Heart left ventricle (tissue), 16 donors: ENCODE measurements at regions of chr19 and their contacts with region 1.

Region 1: GRCh38 chr19:11155373-11156120 is at the start of gene SPC24:
- DNase-seq: peak; percentile 95 to 98 (median 97)
- ATAC-seq: peak; percentile 90 to 96 (median 94)
- H3K4me3 ChIP-seq: peak within 1 kb of the TSS; percentile 25 to 78 (median 60)
- H3K27ac ChIP-seq: peak within 1 kb of the TSS; percentile 30 to 89 (median 74)
- H3K4me1 ChIP-seq: peaks cover 0 to 64% (median 34%) of the 10 kb centered on the region in 12 donors
- H3K27me3 ChIP-seq: no peaks in the 10 kb centered on the region
- CTCF ChIP-seq: peak in 1 of 12 donors; percentile 7
- POLR2A ChIP-seq: peak in 1 of 2 donors; percentile 76
- total RNA-seq, gene SPC24: 1.7 to 10.7 (median 5.2) TPM

Region 2: GRCh38 chr19:11191273-11191755 is 35.8 kb after region 1 on chr19:
- intact Hi-C with region 1: loop called in 4 of 10 experiments (anchors 5 kb)
- DNase-seq: peak; percentile 79 to 94 (median 90)
- ATAC-seq: peak; percentile 44 to 86 (median 81)
- H3K4me3 ChIP-seq: peak overlapping the region in 2 of 12 donors; percentile 16 to 22
- H3K27ac ChIP-seq: peak overlapping the region in 11 of 12 donors; percentile 62 to 97 (median 81)
- H3K4me1 ChIP-seq: peaks cover 13 to 88% (median 69%) of the 10 kb centered on the region in 12 donors
- H3K27me3 ChIP-seq: no peaks in the 10 kb centered on the region
- CTCF ChIP-seq: no peak
- POLR2A ChIP-seq: peak in 1 of 2 donors; percentile 64

Region 3: DNA sequence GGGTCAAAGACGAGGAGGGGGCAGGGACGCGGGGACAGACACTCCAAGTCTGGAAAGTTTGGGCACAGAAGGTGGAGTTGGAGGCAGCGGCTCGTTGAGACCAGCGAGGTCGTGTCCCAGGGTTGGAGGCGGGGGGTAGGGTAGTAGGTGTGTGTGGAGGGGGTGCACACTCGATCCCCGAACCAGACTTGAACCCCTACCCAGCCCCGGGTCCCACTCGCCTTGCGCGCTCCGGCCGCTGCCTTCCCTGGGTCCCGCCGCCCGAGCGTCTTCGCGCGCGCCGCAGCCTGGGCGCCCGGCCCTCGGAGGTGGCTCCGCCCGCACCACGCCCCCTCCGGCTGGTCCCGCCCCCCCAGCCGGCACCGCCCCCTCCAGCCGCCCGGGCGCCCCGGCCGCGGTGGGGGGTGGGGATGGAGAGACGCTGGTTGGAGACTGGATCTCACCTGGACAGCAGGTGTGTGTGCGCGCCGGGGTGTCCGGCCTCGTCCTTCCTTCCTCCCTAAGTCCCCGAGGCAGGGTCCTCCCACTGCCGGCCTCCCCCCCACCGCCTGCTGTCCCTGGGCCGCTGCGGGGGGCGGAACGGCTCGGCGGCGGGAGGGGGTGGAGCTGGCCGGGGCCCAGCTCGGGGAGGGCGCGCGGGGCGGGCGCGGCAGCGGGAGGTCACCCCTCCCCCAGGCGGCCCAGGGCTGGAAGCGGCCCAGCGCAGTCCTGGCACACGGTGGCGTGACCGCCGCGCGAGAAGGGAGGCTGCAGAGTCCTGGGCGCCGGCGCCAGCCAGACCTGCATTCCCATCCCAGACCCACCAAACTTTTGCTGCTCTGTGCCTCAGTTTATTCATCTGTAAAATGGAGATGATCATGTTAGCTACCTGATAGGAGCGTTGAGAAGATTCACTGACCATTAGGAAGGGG is 42.0 kb after region 1 on chr19 and contains the start of gene KANK2:
- intact Hi-C with region 1: loop called in 4 of 10 experiments (anchors 5 kb)
- DNase-seq: peak; percentile 88 to 95 (median 91)
- ATAC-seq: peak; percentile 63 to 90 (median 82)
- H3K4me3 ChIP-seq: peak within 1 kb of the TSS; percentile 27 to 96 (median 77)
- H3K27ac ChIP-seq: peak within 1 kb of the TSS; percentile 81 to 100 (median 94)
- H3K4me1 ChIP-seq: peaks cover 8 to 63% (median 53%) of the 10 kb centered on the region in 12 donors
- H3K27me3 ChIP-seq: peaks cover 0 to 6% (median 0%) of the 10 kb centered on the region in 9 donors
- CTCF ChIP-seq: peak in 4 of 12 donors; percentile 8 to 31 (median 22)
- POLR2A ChIP-seq: peak; percentile 78 to 97
- total RNA-seq, gene KANK2: 232 to 1,831 (median 296) TPM

Region 4: GRCh38 chr19:11337080-11337479 is 181.5 kb after region 1 on chr19:
- intact Hi-C with region 1: no loop called
- DNase-seq: peak in 1 of 5 donors; percentile 22
- ATAC-seq: no peak
- H3K4me3 ChIP-seq: no peak overlapping the region
- H3K27ac ChIP-seq: no peak overlapping the region
- H3K4me1 ChIP-seq: peaks cover 0 to 27% (median 8%) of the 10 kb centered on the region in 12 donors
- H3K27me3 ChIP-seq: no peaks in the 10 kb centered on the region
- CTCF ChIP-seq: no peak
- POLR2A ChIP-seq: no peak